ENCODE measurements at regions of chr20 and their contacts with region 1.

Region 1: GRCh38 chr20:57654363-57654997 is 34.3 kb upstream of the ZBP1 start:
- DNase-seq: peak; percentile 30
- H3K4me3 ChIP-seq: no peak overlapping the region
- H3K27ac ChIP-seq: no peak overlapping the region
- H3K27me3 ChIP-seq: no peaks in the 10 kb centered on the region
- CTCF ChIP-seq: peak; percentile 92

Region 2: DNA sequence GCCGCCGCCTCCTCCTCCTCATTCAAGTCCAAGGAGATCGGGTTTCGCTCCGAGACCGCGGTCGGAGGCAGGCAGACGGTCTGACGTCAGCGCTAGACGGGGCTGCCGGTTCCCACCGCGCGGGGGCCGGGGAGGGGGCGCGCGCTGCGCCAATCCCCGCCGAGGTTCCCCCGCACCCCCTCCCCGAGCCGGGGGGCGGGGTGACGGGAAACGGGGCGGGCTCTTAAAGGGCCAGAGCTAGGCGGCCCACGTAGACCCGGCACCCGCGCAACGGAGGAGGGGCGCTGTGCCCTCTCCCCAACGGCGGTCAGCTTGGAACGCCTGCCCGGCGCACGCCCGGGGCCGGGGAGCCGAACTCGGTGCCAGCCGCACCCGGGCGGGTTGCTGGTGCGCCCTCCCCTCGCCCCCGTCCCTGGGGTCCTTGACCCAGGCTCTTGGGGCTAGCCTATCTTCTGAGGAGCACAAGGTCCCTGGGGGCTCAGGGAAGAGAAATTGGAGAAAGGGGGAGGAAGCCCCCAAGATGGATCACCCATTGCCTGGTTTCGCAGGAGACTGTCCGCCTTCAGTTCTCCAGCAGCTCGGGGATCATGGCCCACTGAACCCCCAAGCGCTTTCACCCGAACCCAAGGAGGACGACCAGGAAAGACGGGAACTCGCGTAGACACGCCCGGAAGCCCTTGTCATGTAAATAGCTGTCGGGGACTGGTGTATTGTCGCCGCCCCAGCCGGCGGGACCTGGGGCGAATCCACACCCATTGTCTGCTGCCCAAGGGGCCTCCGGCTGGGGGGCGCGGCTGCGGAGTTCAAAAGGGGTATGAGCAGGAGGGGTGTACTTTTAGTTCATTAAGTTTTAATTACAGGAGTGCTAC is 55.7 kb after region 1 on chr20 and contains the start of gene PMEPA1:
- CTCF ChIA-PET with region 1: interaction called, 11 read pairs
- POLR2A ChIA-PET with region 1: interaction called, 3 read pairs
- DNase-seq: peak; percentile 85
- H3K4me3 ChIP-seq: peak within 1 kb of the TSS; percentile 65
- H3K27ac ChIP-seq: no peak within 1 kb of the TSS
- H3K27me3 ChIP-seq: peaks cover 6% of the 10 kb centered on the region
- CTCF ChIP-seq: no peak
- polyA plus RNA-seq, gene PMEPA1: 4.3 and 5.6 TPM in 2 replicates

Region 3: GRCh38 chr20:58087193-58087858 is 432.8 kb after region 1 on chr20:
- CTCF ChIA-PET with region 1: interaction called, 32 read pairs
- POLR2A ChIA-PET with region 1: no interaction called
- DNase-seq: no peak
- H3K4me3 ChIP-seq: no peak overlapping the region
- H3K27ac ChIP-seq: no peak overlapping the region
- H3K27me3 ChIP-seq: peaks cover 2% of the 10 kb centered on the region
- CTCF ChIP-seq: peak; percentile 77

Region 4: GRCh38 chr20:58179432-58180099 is 525.1 kb after region 1 on chr20:
- CTCF ChIA-PET with region 1: interaction called, 10 read pairs
- POLR2A ChIA-PET with region 1: no interaction called
- DNase-seq: no peak
- H3K4me3 ChIP-seq: peak overlapping the region; percentile 46
- H3K27ac ChIP-seq: no peak overlapping the region
- H3K27me3 ChIP-seq: peaks cover 24% of the 10 kb centered on the region
- CTCF ChIP-seq: peak; percentile 86

Measured in AG04450 (cell line).